ENCODE measurements at regions of chr5 and their contacts with region 1.

Region 1: DNA sequence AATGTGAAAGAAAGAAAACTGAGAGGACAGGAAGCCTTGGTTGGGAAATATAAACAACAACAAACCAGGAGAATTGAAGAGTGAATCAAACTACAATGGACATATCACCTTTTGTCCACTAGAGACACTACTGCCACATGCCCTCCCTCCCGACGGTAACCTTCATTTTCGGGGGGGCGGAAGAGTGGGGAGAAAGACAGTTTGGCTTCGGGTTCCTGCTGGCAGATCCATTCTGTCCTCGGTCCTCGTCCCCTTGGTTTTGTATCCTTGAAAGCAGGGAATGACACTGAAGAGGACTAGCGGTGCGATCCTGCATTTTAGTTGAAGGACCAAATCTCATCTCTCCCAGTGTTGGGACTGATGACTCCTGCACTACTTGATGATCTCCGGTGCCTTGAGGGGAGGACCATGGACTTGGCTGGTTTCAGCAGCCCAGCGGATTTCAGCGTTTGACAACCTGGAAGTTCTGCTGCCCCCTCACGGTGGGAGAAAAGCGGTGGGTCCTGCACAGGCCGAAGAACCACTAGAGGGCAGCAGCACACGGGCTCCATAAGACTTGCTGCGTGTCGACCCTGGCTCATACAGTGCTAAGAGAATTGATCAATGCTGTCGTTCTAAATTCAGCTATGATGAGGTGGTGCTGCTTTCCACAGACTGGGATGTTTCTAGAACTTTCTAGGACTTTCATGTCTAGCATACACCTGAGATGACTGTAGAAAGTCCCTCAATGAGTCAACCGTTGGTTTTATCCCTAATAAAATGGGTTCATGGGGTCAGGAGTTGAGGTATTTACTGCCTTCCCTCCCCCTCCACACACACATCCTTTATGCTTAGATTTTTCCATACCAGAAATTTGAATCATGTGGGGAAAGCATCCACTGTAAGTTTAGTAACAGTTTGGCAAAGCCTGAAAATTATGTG is 15.1 kb upstream of the ZNF131 start:
- H3K4me3 ChIP-seq: peak overlapping the region; percentile 44
- H3K27ac ChIP-seq: no peak overlapping the region
- H3K4me1 ChIP-seq: no peaks in the 10 kb centered on the region
- CTCF ChIP-seq: peak; percentile 100

Region 2: DNA sequence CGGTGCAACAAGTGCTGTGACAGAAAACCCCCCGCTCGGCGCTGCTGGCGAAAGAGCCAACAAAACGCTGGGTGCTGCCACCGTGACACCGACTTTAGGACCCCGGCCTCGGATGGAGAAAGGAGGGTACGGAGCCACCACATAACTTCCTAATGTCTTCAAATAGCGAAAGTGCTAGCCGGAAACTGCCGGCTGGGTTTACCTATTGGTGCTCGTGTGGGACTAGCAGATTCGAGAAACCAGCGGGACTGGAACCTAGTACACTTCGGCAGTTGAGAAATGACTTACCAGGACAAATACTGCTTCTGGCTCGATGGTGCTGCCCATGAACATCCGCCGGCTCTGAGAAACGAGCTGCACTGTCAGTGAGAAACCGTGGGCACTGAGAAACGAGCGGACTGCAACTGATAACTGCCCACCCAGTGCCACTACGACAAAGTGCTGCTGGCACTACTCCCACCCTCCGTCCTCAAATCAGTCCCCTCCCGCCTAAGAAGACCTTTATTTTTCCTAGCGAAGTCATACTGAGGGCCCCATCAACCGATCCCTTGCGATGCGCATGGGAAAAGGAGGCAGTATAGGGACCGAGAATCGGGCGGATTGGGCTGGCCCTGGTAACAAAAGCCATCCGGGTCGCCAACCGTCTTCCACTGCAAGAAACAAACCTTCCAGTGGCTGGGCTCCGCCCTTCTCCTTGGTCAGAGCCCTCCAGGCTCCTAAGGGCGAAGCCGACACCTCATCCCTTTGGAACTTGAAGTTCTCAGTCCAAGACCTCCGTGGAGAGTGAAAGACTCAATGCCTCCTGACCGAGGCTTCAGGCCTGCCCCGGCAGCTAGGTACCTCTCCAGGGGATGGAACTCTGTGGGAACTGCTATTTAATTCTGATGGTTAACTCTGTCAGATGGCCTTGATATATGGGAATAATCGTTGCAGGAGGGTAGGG is 38.6 kb before region 1 on chr5:
- CTCF ChIA-PET with region 1: interaction called, 15 read pairs
- POLR2A ChIA-PET with region 1: no interaction called
- H3K4me3 ChIP-seq: peak overlapping the region; percentile 63
- H3K27ac ChIP-seq: peak overlapping the region; percentile 87
- H3K4me1 ChIP-seq: peaks cover 2% of the 10 kb centered on the region; the same call in 1 of the 2 replicates
- CTCF ChIP-seq: no peak

Region 3: DNA sequence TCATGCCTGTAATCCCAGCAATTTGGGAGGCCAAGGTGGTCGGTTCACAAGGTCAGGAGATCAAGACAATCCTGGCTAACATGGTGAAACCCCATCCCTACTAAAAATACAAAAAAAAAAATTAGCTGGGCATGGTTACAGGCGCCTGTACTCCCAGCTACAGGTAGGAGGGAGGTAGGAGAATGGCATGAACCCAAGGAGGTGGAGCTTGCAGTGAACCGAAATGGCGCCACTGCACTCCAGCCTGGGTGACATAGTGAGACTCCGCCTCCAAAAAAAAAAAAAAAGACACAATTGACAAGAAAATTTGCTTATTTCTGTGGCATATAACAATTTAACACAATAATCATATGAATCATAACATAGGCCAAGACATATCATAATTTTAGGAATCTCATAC is 20.2 kb before region 1 on chr5:
- CTCF ChIA-PET with region 1: interaction called, 11 read pairs
- POLR2A ChIA-PET with region 1: no interaction called
- H3K4me3 ChIP-seq: no peak overlapping the region
- H3K27ac ChIP-seq: no peak overlapping the region
- H3K4me1 ChIP-seq: no peaks in the 10 kb centered on the region
- CTCF ChIP-seq: no peak

Region 4: GRCh38 chr5:43129161-43129560 is 23.5 kb after region 1 on chr5:
- CTCF ChIA-PET with region 1: interaction called, 141 read pairs
- POLR2A ChIA-PET with region 1: no interaction called
- H3K4me3 ChIP-seq: no peak overlapping the region
- H3K27ac ChIP-seq: no peak overlapping the region
- H3K4me1 ChIP-seq: no peaks in the 10 kb centered on the region
- CTCF ChIP-seq: no peak